SK-N-SH (cell line): ENCODE measurements at regions of chr19 and their contacts with region 1.

Region 1: DNA sequence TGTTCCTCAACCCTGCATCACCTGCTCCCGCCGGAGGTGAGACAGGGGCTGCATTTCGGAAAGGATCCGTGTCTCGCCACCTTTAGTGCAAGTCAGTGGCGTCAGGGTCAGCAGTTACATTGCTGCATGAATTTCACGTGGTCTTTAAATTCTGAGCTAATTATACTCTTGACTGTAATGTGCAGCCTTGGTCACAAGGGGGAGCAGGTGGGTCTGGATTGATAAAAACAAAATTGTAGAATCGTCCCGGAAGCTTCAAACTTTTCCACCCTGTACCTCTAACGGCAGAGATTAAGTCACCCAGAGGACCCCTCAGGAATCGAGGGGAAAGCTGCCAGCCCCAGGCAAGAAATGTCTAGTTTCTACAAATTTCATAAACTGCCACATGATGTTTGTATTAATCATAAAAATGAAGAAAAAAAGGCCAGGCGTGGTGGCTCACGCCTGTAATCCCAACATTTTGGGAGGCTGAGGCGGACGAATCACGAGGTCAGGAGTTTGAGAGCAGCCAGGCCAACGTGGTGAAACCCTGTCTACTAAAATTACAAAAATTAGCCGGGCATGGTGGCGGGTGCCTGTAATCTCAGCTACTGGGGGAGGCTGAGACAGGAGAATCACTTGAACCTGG is 20.2 kb downstream of the BBC3 start:
- DNase-seq: peak; percentile 74
- H3K4me3 ChIP-seq: no peak overlapping the region
- H3K27ac ChIP-seq: peak overlapping the region; percentile 29 to 76; a peak in 3 of 4 replicates
- H3K4me1 ChIP-seq: peaks cover 3 to 8% of the 10 kb centered on the region in 2 experiments; a peak in 1 of 4 replicates
- H3K27me3 ChIP-seq: no peaks in the 10 kb centered on the region
- CTCF ChIP-seq: peak; percentile 85
- EP300 ChIP-seq: no peak
- RAD21 ChIP-seq: peak; percentile 83

Region 2: DNA sequence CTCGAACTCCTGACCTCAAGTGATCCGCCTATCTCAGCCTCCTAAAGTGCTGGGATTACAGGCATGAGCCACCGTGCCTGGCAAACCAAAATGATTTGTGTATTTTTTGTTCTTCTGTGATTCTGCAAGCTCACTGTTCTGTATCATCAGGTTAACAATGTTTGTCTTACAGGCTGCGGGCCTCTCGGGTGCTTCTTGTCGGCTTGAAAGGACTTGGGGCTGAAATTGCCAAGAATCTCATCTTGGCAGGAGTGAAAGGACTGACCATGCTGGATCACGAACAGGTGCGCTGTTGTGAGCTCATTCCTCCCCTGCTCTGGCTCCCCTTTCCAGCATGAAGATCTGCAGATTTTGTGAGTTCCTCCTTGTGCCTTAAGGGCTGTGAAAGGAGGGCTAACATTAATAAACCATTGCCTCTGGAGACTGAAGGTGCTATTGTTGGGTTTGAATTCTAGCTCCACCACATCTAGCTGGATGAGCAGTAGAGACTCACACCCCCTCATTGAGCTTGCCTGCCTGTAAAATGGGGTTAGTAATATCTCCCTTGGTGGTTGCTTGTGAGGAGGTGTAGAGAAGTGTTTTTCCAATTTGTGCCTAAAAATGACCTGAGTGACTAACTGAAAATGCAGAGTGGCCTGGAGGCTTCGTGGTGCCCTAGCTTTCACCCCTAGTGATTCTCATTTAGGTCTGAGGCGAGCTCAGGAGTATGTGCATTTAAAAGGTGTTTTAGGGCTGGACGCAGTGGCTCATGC is 67.3 kb before region 1 on chr19:
- CTCF ChIA-PET with region 1: interaction called, 29 read pairs
- POLR2A ChIA-PET with region 1: no interaction called
- DNase-seq: no peak
- H3K4me3 ChIP-seq: no peak overlapping the region
- H3K27ac ChIP-seq: no peak overlapping the region
- H3K4me1 ChIP-seq: peaks cover 0 to 12% of the 10 kb centered on the region in 2 experiments; a peak in 1 of 4 replicates
- H3K27me3 ChIP-seq: no peaks in the 10 kb centered on the region
- CTCF ChIP-seq: no peak
- EP300 ChIP-seq: no peak
- RAD21 ChIP-seq: no peak

Region 3: GRCh38 chr19:47172666-47173455 is 37.9 kb before region 1 on chr19:
- CTCF ChIA-PET with region 1: interaction called, 17 read pairs
- POLR2A ChIA-PET with region 1: no interaction called
- DNase-seq: no peak
- H3K4me3 ChIP-seq: no peak overlapping the region
- H3K27ac ChIP-seq: peak overlapping the region in 1 of 2 experiments; percentile 28; a peak in 1 of 4 replicates
- H3K4me1 ChIP-seq: peaks cover 0 to 15% of the 10 kb centered on the region in 2 experiments; a peak in 3 of 4 replicates
- H3K27me3 ChIP-seq: no peaks in the 10 kb centered on the region
- CTCF ChIP-seq: no peak
- EP300 ChIP-seq: no peak
- RAD21 ChIP-seq: no peak

Region 4: GRCh38 chr19:47197141-47197540 is 13.7 kb before region 1 on chr19:
- CTCF ChIA-PET with region 1: interaction called, 26 read pairs
- POLR2A ChIA-PET with region 1: interaction called, 4 read pairs
- DNase-seq: no peak
- H3K4me3 ChIP-seq: no peak overlapping the region
- H3K27ac ChIP-seq: no peak overlapping the region
- H3K4me1 ChIP-seq: no peaks in the 10 kb centered on the region
- H3K27me3 ChIP-seq: no peaks in the 10 kb centered on the region
- CTCF ChIP-seq: no peak
- EP300 ChIP-seq: no peak
- RAD21 ChIP-seq: no peak

Region 5: GRCh38 chr19:47256688-47257443 is 46.1 kb after region 1 on chr19:
- CTCF ChIA-PET with region 1: interaction called, 10 read pairs
- POLR2A ChIA-PET with region 1: interaction called, 3 read pairs
- DNase-seq: peak; percentile 97
- H3K4me3 ChIP-seq: peak overlapping the region; percentile 69 to 72
- H3K27ac ChIP-seq: peak overlapping the region; percentile 94
- H3K4me1 ChIP-seq: peaks cover 9 to 13% of the 10 kb centered on the region in 2 experiments; a peak in 2 of 4 replicates
- H3K27me3 ChIP-seq: no peaks in the 10 kb centered on the region
- CTCF ChIP-seq: no peak
- EP300 ChIP-seq: no peak
- RAD21 ChIP-seq: no peak